Ovary (tissue), 10 donors: ENCODE measurements at regions of chr10 and their contacts with region 1.

Region 1: DNA sequence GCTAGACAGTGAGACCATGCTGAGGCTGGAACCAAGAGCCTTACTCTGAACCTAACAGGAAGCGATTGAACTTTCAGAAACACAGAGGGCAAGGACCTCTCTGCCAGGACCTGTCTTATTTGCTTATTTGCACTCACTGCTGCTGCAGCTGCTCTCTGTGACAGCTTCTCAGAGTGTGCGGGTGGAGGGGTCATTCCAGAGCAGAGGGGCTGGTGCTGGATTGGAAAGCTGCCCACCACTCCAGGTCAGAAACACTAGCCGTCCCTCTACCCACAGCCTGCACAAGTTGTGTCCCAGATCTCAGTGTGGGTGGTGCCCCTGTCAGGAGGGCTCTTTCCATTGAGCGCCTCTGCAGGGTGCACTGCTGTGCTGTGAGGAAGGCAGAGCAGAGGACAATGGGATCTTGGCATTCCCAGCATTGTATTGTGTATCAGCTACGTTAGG is 126.2 kb downstream of the CCNY start:
- DNase-seq: no peak
- H3K4me3 ChIP-seq: no peak overlapping the region
- H3K27ac ChIP-seq: no peak overlapping the region
- H3K4me1 ChIP-seq: peaks cover 17% of the 10 kb centered on the region
- H3K27me3 ChIP-seq: no peaks in the 10 kb centered on the region
- CTCF ChIP-seq: no peak
- EP300 ChIP-seq: no peak
- POLR2A ChIP-seq: no peak

Region 2: GRCh38 chr10:35355971-35356724 is 106.4 kb before region 1 on chr10:
- intact Hi-C with region 1: loop called in 1 of 4 experiments (anchors 10 kb)
- DNase-seq: no peak
- H3K4me3 ChIP-seq: no peak overlapping the region
- H3K27ac ChIP-seq: no peak overlapping the region
- H3K4me1 ChIP-seq: peaks cover 14% of the 10 kb centered on the region
- H3K27me3 ChIP-seq: no peaks in the 10 kb centered on the region
- CTCF ChIP-seq: no peak
- EP300 ChIP-seq: no peak
- POLR2A ChIP-seq: no peak

Region 3: DNA sequence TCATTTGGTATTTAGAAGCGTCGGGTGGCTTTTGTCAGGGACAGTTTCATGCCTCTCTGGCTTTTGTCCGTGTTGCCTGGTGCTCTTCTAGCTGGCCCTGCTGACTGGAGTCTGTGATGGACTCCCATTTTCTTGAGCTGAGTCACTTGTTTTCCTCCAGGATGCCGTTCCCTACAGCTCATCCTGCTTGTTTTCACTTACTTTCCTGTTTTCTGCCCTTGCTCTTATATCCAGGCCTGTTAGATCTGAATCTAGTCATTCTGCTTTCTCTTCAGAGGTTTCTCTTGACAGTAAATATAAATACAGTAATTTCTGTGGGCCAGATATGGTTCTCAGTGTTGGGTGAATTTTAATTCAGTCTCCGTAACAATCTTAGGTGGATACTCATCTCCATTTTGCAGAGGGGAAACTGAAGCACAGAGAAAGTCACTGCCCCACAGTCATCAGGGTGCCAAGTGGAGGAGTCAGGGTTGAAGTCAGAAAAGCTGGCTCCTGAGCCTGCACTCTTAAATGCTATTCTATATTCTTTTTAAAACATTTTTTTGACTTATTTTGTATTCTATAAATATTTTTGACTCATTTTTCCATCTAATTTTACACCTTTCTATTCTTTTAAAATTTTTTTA is 40.8 kb before region 1 on chr10:
- intact Hi-C with region 1: no loop called
- DNase-seq: peak in 2 of 5 donors; percentile 44 to 58
- H3K4me3 ChIP-seq: no peak overlapping the region
- H3K27ac ChIP-seq: peak overlapping the region; percentile 31 to 82
- H3K4me1 ChIP-seq: peaks cover 17% of the 10 kb centered on the region
- H3K27me3 ChIP-seq: no peaks in the 10 kb centered on the region
- CTCF ChIP-seq: no peak
- EP300 ChIP-seq: no peak
- POLR2A ChIP-seq: no peak